MCF 10A (cell line): ENCODE measurements at regions of chr6 and their contacts with region 1.

Region 1: GRCh38 chr6:31971993-31972708 is at the start of gene DXO:
- DNase-seq: peak; percentile 98
- H3K4me3 Mint-ChIP-seq: peak within 1 kb of the TSS; percentile 80
- H3K27ac Mint-ChIP-seq: peak within 1 kb of the TSS; percentile 100
- H3K4me1 Mint-ChIP-seq: peaks cover 21% of the 10 kb centered on the region
- H3K27me3 Mint-ChIP-seq: no peaks in the 10 kb centered on the region
- CTCF ChIP-seq: no peak
- total RNA-seq, gene DXO: 39.1 and 41.4 TPM in 2 replicates

Region 2: GRCh38 chr6:31680840-31681671 is 291.1 kb before region 1 on chr6 and contains the start of gene LY6G5C:
- CTCF ChIA-PET with region 1: no interaction called
- POLR2A ChIA-PET with region 1: no interaction called
- intact Hi-C with region 1: no loop called
- DNase-seq: peak; percentile 81
- H3K4me3 Mint-ChIP-seq: peak within 1 kb of the TSS; percentile 73
- H3K27ac Mint-ChIP-seq: peak within 1 kb of the TSS; percentile 87
- H3K4me1 Mint-ChIP-seq: peaks cover 12% of the 10 kb centered on the region
- H3K27me3 Mint-ChIP-seq: peaks cover 18% of the 10 kb centered on the region
- CTCF ChIP-seq: peak; percentile 84
- total RNA-seq, gene LY6G5C: 0.64 and 1.4 TPM in 2 replicates

Region 3: DNA sequence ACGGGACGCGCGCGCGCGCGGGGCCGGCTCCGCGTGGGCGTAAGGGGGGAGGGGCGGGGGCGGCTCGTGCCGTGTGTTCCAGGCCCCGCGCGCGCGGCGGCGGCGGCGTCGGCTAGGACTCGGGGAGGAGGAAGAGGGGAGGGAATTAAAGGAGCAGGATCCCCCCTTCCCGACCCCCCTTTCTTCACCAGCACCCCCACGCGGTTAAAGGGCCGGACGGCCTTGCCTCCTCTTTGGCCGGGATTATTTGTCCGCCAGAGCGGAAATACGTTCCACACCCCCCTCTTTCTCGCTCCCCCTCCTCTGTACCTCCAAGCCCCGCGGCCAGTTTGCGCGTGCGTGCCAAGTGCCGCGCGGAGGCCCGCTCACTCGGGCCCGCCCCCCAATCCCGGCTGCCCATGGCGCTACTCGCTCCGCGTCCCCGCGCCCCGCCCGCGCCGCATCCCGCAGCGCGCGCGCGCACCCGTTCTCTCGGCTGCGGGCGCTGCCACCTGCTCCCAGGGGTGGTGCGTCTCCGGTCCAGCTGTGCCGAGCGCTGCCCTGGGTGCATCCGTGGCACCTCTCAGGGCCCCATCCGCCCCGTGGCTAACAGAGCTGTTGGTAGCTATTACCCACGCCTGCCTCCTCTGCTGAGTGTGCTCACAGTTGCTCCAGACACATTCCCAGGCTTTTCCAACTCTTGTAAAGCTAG is 70.1 kb before region 1 on chr6 and contains the start of gene ZBTB12:
- CTCF ChIA-PET with region 1: interaction called, 3 read pairs
- POLR2A ChIA-PET with region 1: interaction called, 37 read pairs
- intact Hi-C with region 1: no loop called
- DNase-seq: peak; percentile 93
- H3K4me3 Mint-ChIP-seq: peak within 1 kb of the TSS; percentile 67
- H3K27ac Mint-ChIP-seq: peak within 1 kb of the TSS; percentile 33
- H3K4me1 Mint-ChIP-seq: peaks cover 24% of the 10 kb centered on the region
- H3K27me3 Mint-ChIP-seq: no peaks in the 10 kb centered on the region
- CTCF ChIP-seq: no peak
- total RNA-seq, gene ZBTB12: 3.6 and 4.0 TPM in 2 replicates

Region 4: GRCh38 chr6:31952140-31952805 is 19.9 kb before region 1 on chr6:
- CTCF ChIA-PET with region 1: interaction called, 14 read pairs
- POLR2A ChIA-PET with region 1: interaction called, 19 read pairs
- intact Hi-C with region 1: no loop called
- DNase-seq: peak; percentile 73
- H3K4me3 Mint-ChIP-seq: no peak overlapping the region
- H3K27ac Mint-ChIP-seq: peak overlapping the region; percentile 61
- H3K4me1 Mint-ChIP-seq: peaks cover 21% of the 10 kb centered on the region
- H3K27me3 Mint-ChIP-seq: no peaks in the 10 kb centered on the region
- CTCF ChIP-seq: peak; percentile 75

Region 5: DNA sequence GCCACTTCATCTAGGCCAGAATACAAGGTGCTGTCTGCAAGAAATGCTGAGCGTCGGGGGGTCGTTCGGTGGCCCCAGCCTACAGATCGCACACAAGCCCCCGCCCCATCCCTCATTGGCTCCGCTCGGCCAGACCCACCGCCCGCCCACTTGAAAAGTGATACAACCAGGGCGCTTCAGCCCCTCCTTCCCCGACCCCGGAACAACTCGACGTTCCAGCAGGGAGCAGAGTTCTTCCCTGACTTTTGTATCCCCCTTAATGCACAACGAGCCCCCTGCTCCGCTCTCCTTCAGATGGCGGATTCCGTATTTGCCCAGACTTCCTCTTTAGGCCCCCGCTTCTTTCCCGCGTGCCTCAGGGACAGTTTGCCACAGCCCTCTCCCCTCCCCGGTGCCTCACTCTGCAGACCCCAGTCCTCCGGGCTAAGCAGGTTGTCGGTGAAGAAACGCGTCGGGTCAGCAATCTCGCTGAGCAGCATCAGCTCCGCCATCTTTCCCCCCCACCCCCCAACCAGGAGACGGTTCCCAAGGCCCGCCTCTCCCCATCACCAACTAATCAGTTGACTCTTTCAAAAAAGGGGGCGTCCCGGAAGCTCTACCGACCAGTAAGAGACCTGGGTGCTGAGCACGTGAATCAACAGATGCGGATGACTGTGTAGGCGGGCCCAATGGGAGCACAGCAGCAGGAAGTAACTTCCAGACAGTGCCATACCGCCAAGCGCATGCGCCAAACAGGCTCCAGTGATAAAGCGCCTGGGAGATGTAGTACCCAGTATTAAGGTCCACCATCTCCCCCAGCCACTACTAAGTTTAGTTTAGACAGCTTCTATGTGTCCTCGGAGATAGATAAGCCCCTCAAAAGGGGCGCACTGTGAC is 155.8 kb after region 1 on chr6 and contains the start of gene ATF6B:
- CTCF ChIA-PET with region 1: no interaction called
- POLR2A ChIA-PET with region 1: interaction called, 23 read pairs
- intact Hi-C with region 1: no loop called
- DNase-seq: peak; percentile 99
- H3K4me3 Mint-ChIP-seq: peak within 1 kb of the TSS; percentile 99
- H3K27ac Mint-ChIP-seq: peak within 1 kb of the TSS; percentile 96
- H3K4me1 Mint-ChIP-seq: peaks cover 26% of the 10 kb centered on the region
- H3K27me3 Mint-ChIP-seq: no peaks in the 10 kb centered on the region
- CTCF ChIP-seq: no peak
- total RNA-seq, gene ATF6B: 65.6 and 86.5 TPM in 2 replicates

Region 6: GRCh38 chr6:32177788-32178546 is 205.8 kb after region 1 on chr6 and contains the start of gene RNF5:
- CTCF ChIA-PET with region 1: no interaction called
- POLR2A ChIA-PET with region 1: interaction called, 10 read pairs
- intact Hi-C with region 1: no loop called
- DNase-seq: peak; percentile 100
- H3K4me3 Mint-ChIP-seq: peak within 1 kb of the TSS; percentile 79
- H3K27ac Mint-ChIP-seq: peak within 1 kb of the TSS; percentile 91
- H3K4me1 Mint-ChIP-seq: peaks cover 55% of the 10 kb centered on the region
- H3K27me3 Mint-ChIP-seq: no peaks in the 10 kb centered on the region
- CTCF ChIP-seq: no peak
- total RNA-seq, gene RNF5: 28.1 and 29.6 TPM in 2 replicates

Region 7: GRCh38 chr6:32355018-32355417 is 382.9 kb after region 1 on chr6:
- CTCF ChIA-PET with region 1: no interaction called
- POLR2A ChIA-PET with region 1: no interaction called
- intact Hi-C with region 1: no loop called
- DNase-seq: no peak
- H3K4me3 Mint-ChIP-seq: no peak overlapping the region
- H3K27ac Mint-ChIP-seq: no peak overlapping the region
- H3K4me1 Mint-ChIP-seq: no peaks in the 10 kb centered on the region
- H3K27me3 Mint-ChIP-seq: peaks cover 84% of the 10 kb centered on the region
- CTCF ChIP-seq: no peak